ENCODE measurements at regions of chr15 and their contacts with region 1.

Region 1: DNA sequence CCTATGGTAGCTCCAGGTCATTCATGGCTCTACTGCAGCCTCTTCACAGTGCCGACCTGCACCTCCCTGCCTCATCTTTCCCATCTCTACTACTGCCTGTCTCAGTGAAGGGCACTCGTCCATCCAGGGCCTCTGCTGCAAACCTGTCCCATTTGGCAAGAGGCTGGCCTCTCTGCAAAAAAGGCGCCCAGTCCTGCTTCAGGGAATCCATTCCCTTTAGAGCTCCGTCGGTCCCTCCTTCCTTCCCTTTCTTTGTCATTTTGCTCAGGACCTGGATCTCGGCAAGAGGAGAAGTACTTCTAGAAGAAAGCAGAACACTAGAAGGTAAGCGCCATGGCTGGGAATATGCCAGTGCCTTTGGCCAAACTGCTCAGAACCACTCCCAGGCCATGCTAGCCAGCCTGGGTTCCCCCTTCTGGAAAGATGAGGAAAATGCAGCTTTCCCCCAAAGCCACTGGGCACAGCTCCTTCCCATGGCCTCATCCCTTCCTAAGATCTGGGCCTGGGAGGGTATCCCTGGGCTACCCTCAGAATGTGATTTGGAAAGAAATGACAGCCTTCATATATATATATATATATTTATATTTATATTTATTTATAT is 6.4 kb upstream of the ISL2 start:
- DNase-seq: peak; percentile 71
- H3K4me3 ChIP-seq: no peak overlapping the region
- H3K27ac ChIP-seq: no peak overlapping the region
- H3K4me1 ChIP-seq: peaks cover under 1% of the 10 kb centered on the region
- H3K27me3 ChIP-seq: peaks cover 10% of the 10 kb centered on the region
- CTCF ChIP-seq: peak; percentile 62

Region 2: GRCh38 chr15:75955720-75956119 is 374.5 kb before region 1 on chr15:
- CTCF ChIA-PET with region 1: no interaction called
- POLR2A ChIA-PET with region 1: no interaction called
- intact Hi-C with region 1: no loop called
- DNase-seq: no peak
- H3K4me3 ChIP-seq: no peak overlapping the region
- H3K27ac ChIP-seq: no peak overlapping the region
- H3K4me1 ChIP-seq: no peaks in the 10 kb centered on the region
- H3K27me3 ChIP-seq: peaks cover 7% of the 10 kb centered on the region
- CTCF ChIP-seq: no peak

Region 3: GRCh38 chr15:76177491-76178040 is 152.6 kb before region 1 on chr15:
- CTCF ChIA-PET with region 1: no interaction called
- POLR2A ChIA-PET with region 1: no interaction called
- intact Hi-C with region 1: no loop called
- DNase-seq: no peak
- H3K4me3 ChIP-seq: no peak overlapping the region
- H3K27ac ChIP-seq: no peak overlapping the region
- H3K4me1 ChIP-seq: no peaks in the 10 kb centered on the region
- H3K27me3 ChIP-seq: no peaks in the 10 kb centered on the region
- CTCF ChIP-seq: no peak

Region 4: DNA sequence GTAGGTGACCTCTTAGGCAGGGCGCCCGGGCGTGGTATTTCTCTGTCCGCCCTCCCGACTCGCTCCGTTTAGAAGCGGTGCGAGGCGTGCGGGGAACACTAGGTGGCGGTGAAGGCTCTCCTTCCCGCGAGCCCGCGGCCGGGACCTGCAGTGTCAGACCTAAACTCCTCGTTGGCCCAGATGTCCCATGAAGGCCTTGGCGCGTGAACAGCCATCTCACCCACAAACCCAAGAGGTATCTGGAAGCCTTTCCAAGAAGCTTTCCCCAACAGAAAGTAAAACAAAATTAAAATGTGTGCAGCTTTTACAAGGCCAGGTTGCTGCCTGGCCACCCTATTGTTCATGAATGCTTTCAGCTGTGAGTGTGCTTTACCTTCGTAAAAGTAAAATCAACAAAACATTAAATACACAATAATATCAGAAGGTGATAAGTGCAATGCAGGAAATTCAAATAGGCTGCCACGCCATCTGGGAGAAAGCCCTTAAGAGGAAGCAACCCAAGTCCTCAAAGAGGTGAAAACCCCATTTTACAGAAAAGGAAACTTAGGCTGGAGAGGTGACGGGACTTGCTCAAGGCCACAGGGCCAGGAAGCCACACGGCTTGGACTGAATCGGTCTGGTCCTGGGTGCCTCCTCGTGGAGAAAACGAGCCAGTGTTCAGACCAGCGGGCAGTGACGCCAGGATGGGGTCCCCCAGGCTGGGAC is 139.2 kb before region 1 on chr15:
- CTCF ChIA-PET with region 1: interaction called, 6 read pairs
- POLR2A ChIA-PET with region 1: no interaction called
- intact Hi-C with region 1: loop called (anchors 5 kb)
- DNase-seq: peak; percentile 84
- H3K4me3 ChIP-seq: no peak overlapping the region
- H3K27ac ChIP-seq: no peak overlapping the region
- H3K4me1 ChIP-seq: peaks cover 3% of the 10 kb centered on the region
- H3K27me3 ChIP-seq: no peaks in the 10 kb centered on the region
- CTCF ChIP-seq: peak; percentile 93

Region 5: GRCh38 chr15:76270886-76271285 is 59.3 kb before region 1 on chr15:
- CTCF ChIA-PET with region 1: interaction called, 14 read pairs
- POLR2A ChIA-PET with region 1: no interaction called
- intact Hi-C with region 1: no loop called
- DNase-seq: no peak
- H3K4me3 ChIP-seq: no peak overlapping the region
- H3K27ac ChIP-seq: no peak overlapping the region
- H3K4me1 ChIP-seq: no peaks in the 10 kb centered on the region
- H3K27me3 ChIP-seq: no peaks in the 10 kb centered on the region
- CTCF ChIP-seq: no peak

Region 6: GRCh38 chr15:76588811-76589747 is 258.9 kb after region 1 on chr15:
- CTCF ChIA-PET with region 1: no interaction called
- POLR2A ChIA-PET with region 1: no interaction called
- intact Hi-C with region 1: no loop called
- DNase-seq: peak; percentile 24
- H3K4me3 ChIP-seq: no peak overlapping the region
- H3K27ac ChIP-seq: no peak overlapping the region
- H3K4me1 ChIP-seq: no peaks in the 10 kb centered on the region
- H3K27me3 ChIP-seq: no peaks in the 10 kb centered on the region
- CTCF ChIP-seq: 0 out of 2 replicates have a peak, but pooled peaks have one; percentile 12

Region 7: GRCh38 chr15:76711351-76711827 is 381.2 kb after region 1 on chr15:
- CTCF ChIA-PET with region 1: no interaction called
- POLR2A ChIA-PET with region 1: no interaction called
- intact Hi-C with region 1: no loop called
- DNase-seq: no peak
- H3K4me3 ChIP-seq: no peak overlapping the region
- H3K27ac ChIP-seq: no peak overlapping the region
- H3K4me1 ChIP-seq: no peaks in the 10 kb centered on the region
- H3K27me3 ChIP-seq: no peaks in the 10 kb centered on the region
- CTCF ChIP-seq: no peak

Measured in A673 (cell line).